ENCODE measurements at regions of chr10 and their contacts with region 1.

Region 1: GRCh38 chr10:80444646-80445319 is 9.3 kb upstream of the TSPAN14 start:
- DNase-seq: peak; percentile 43 to 76 (median 56)
- H3K4me3 ChIP-seq: no peak overlapping the region
- H3K27ac ChIP-seq: no peak overlapping the region
- H3K4me1 ChIP-seq: no peaks in the 10 kb centered on the region
- H3K27me3 ChIP-seq: no peaks in the 10 kb centered on the region
- CTCF ChIP-seq: peak in 2 of 3 donors; percentile 22 to 38
- EP300 ChIP-seq: no peak
- POLR2A ChIP-seq: no peak

Region 2: DNA sequence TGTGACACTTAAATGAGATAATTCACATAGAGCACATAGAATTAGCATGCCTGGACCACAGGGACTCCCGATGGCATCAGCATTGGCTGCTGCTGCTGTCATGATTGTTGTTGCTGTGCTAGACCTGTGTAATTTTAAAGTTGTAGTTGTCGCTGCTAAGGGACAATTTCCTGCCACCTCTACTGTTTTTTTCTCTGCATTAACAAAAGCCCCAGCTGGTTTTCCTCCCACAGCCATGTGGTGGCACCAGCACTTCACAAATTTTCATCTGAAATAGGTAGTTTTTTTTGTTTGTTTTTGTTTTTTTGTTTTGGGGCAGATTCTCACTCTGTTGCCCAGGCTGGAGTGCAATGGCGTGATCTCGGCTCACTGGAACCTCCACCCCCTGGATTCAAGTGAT is 61.8 kb before region 1 on chr10:
- intact Hi-C with region 1: loop called in 1 of 4 experiments (anchors 10 kb)
- DNase-seq: peak; percentile 21 to 50 (median 32)
- H3K4me3 ChIP-seq: no peak overlapping the region
- H3K27ac ChIP-seq: no peak overlapping the region
- H3K4me1 ChIP-seq: no peaks in the 10 kb centered on the region
- H3K27me3 ChIP-seq: no peaks in the 10 kb centered on the region
- CTCF ChIP-seq: peak; percentile 18 to 55 (median 47)
- EP300 ChIP-seq: no peak
- POLR2A ChIP-seq: no peak

Region 3: GRCh38 chr10:80498833-80499741 is 54.3 kb after region 1 on chr10:
- intact Hi-C with region 1: loop called in 3 of 4 experiments (anchors 1 to 5 kb)
- DNase-seq: peak; percentile 89 to 96 (median 94)
- H3K4me3 ChIP-seq: no peak overlapping the region
- H3K27ac ChIP-seq: peak overlapping the region; percentile 66 to 79
- H3K4me1 ChIP-seq: peaks cover 47% of the 10 kb centered on the region
- H3K27me3 ChIP-seq: no peaks in the 10 kb centered on the region
- CTCF ChIP-seq: no peak
- EP300 ChIP-seq: no peak
- POLR2A ChIP-seq: no peak

Region 4: GRCh38 chr10:80504158-80504811 is 59.5 kb after region 1 on chr10:
- intact Hi-C with region 1: loop called (anchors 1 to 5 kb)
- DNase-seq: peak in 1 of 5 donors; percentile 24
- H3K4me3 ChIP-seq: no peak overlapping the region
- H3K27ac ChIP-seq: no peak overlapping the region
- H3K4me1 ChIP-seq: peaks cover 35% of the 10 kb centered on the region
- H3K27me3 ChIP-seq: no peaks in the 10 kb centered on the region
- CTCF ChIP-seq: no peak
- EP300 ChIP-seq: no peak
- POLR2A ChIP-seq: no peak

Region 5: GRCh38 chr10:80509403-80510161 is 64.8 kb after region 1 on chr10:
- intact Hi-C with region 1: loop called in 3 of 4 experiments (anchors 2 to 5 kb)
- DNase-seq: no peak
- H3K4me3 ChIP-seq: no peak overlapping the region
- H3K27ac ChIP-seq: no peak overlapping the region
- H3K4me1 ChIP-seq: peaks cover 8% of the 10 kb centered on the region
- H3K27me3 ChIP-seq: no peaks in the 10 kb centered on the region
- CTCF ChIP-seq: no peak
- EP300 ChIP-seq: no peak
- POLR2A ChIP-seq: no peak

Region 6: DNA sequence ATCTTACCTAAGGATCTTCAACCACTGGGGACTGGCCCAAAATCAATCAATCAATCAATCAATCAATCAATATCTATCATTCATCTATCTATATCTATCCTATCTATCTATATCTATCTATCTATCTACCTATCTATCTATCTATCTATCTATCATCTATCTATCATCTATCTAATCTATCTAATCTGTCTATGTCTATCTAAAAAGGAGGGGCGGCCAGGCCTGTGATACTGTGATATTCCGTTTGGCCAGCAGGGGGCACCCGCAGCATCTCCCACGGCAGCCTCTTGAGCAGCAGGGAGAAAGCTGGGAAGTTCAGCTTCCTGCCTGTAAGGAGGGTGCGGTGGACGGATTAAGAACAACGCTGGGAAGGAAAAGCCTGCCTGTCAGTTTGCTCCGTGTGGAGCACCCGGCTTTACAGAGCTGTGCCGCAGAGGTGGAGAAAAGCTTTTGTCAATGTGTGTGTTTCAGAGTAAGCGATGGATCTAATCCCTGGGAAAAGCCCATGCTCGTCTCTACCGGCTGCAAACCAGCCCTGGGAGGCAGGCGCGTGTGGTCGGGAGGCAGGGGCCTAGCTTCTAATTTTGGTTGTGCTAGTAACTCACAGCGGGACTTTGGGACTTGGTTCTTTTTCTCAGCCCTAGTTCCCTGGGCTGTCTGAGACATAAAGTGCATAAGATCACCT is 217.9 kb after region 1 on chr10:
- intact Hi-C with region 1: loop called in 1 of 4 experiments (anchors 5 kb)
- DNase-seq: peak; percentile 63 to 85 (median 76)
- H3K4me3 ChIP-seq: peak overlapping the region; percentile 21
- H3K27ac ChIP-seq: no peak overlapping the region
- H3K4me1 ChIP-seq: no peaks in the 10 kb centered on the region
- H3K27me3 ChIP-seq: no peaks in the 10 kb centered on the region
- CTCF ChIP-seq: peak; percentile 65 to 73 (median 71)
- EP300 ChIP-seq: no peak
- POLR2A ChIP-seq: no peak